ENCODE measurements at regions of chr22 and their contacts with region 1.

Region 1: GRCh38 chr22:31943976-31944699 is at the start of gene YWHAH:
- DNase-seq: peak; percentile 93
- H3K4me3 Mint-ChIP-seq: no peak within 1 kb of the TSS
- H3K27ac Mint-ChIP-seq: peak within 1 kb of the TSS; percentile 87
- H3K4me1 Mint-ChIP-seq: peaks cover 18% of the 10 kb centered on the region
- H3K27me3 Mint-ChIP-seq: no peaks in the 10 kb centered on the region
- total RNA-seq, gene YWHAH: 115 to 118 TPM

Region 2: GRCh38 chr22:30717331-30717921 is 1226.7 kb before region 1 on chr22:
- CTCF ChIA-PET with region 1: no interaction called
- intact Hi-C with region 1: no loop called
- DNase-seq: peak; percentile 30
- H3K4me3 Mint-ChIP-seq: no peak overlapping the region
- H3K27ac Mint-ChIP-seq: peak overlapping the region; percentile 26
- H3K4me1 Mint-ChIP-seq: peaks cover 3% of the 10 kb centered on the region
- H3K27me3 Mint-ChIP-seq: no peaks in the 10 kb centered on the region

Region 3: DNA sequence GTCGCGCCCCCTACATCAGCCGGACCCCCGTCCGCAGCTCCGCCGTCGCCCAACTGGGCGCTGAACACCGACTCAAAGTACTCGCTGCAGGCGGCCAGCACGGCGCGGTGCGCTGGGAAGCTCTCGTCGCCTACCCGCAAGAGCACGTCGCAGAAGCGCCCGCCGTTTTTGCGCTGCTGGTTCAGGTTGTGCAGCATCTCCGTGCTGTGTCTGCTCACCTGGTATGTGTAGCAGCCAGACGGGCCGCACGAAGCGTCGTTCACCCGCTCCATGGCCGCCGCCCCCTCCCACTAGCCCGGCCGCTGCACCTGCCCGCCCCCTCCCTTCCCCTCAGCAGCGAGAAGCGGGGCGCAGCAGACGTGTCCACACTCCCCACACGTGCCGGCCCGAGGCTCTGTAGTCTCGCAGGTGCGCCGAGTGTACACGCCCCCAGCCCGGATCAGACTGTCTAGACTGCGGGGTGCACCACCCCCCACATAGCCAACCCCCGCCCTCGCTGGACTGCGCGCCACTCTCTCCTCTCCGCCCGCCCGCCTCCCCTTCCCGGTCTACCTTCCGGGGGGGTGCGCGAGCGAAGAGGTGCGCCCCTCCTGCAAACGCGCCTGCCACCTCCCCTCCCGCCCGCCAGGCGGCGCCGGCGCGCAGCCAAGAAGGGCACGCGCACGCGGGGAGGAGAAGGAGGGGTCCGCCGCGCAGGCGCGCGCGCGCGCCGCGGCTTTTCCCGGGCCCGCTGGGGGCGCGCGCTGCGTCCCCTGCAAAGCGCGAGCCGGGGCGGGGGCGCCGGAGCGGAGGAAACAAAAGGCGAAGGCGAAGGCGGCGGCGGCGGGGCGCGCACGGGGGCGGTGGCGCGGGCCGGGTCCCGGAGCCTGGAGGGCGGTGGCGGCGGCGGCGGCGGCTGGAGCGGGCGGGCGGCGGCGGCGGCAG is 598.5 kb before region 1 on chr22:
- CTCF ChIA-PET with region 1: no interaction called
- intact Hi-C with region 1: loop called (anchors 5 kb)
- DNase-seq: peak; percentile 86
- H3K4me3 Mint-ChIP-seq: peak overlapping the region; percentile 90
- H3K27ac Mint-ChIP-seq: peak overlapping the region; percentile 94
- H3K4me1 Mint-ChIP-seq: peaks cover 42% of the 10 kb centered on the region
- H3K27me3 Mint-ChIP-seq: no peaks in the 10 kb centered on the region

Region 4: GRCh38 chr22:31439808-31440207 is 504.3 kb before region 1 on chr22:
- CTCF ChIA-PET with region 1: no interaction called
- intact Hi-C with region 1: no loop called
- DNase-seq: no peak
- H3K4me3 Mint-ChIP-seq: no peak overlapping the region
- H3K27ac Mint-ChIP-seq: no peak overlapping the region
- H3K4me1 Mint-ChIP-seq: peaks cover 3% of the 10 kb centered on the region
- H3K27me3 Mint-ChIP-seq: no peaks in the 10 kb centered on the region

Region 5: DNA sequence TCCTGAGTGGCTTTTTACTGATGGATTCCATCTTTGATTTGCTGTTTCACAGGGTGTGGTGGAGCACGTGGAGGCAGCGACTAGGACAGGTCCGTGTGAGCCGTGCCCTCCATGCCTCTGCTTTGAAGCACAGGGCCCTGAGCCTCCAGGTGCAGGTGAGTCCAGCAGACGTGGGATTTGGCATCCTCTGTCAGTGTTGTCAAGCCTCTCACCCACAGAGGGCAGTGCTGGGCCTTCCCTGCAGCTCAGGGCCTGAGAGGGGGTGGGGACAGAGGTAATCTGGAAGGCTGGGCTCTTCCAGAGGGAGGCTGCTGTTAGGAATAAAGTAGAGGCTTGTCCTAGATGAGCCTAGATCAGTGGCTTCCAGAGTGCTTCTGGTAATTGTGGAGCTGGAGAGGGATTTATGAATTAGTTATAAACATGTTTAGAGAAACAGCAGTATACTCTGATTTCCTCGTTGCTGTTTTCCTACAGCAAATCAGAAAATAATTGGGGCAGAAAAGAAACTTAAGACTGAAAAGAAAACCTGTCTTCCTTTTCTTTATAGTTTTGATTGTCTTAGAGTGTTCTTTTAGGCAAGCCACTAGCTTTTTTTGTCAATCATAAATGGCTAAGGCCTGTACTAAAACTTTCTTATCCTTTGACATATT is 382.8 kb before region 1 on chr22:
- CTCF ChIA-PET with region 1: no interaction called
- intact Hi-C with region 1: loop called (anchors 10 kb)
- DNase-seq: peak; percentile 83
- H3K4me3 Mint-ChIP-seq: no peak overlapping the region
- H3K27ac Mint-ChIP-seq: peak overlapping the region; percentile 20
- H3K4me1 Mint-ChIP-seq: no peaks in the 10 kb centered on the region
- H3K27me3 Mint-ChIP-seq: no peaks in the 10 kb centered on the region

Region 6: GRCh38 chr22:31768422-31769059 is 175.6 kb before region 1 on chr22:
- CTCF ChIA-PET with region 1: interaction called, 3 read pairs
- intact Hi-C with region 1: loop called (anchors 5 kb)
- DNase-seq: no peak
- H3K4me3 Mint-ChIP-seq: no peak overlapping the region
- H3K27ac Mint-ChIP-seq: peak overlapping the region; percentile 50
- H3K4me1 Mint-ChIP-seq: peaks cover 12% of the 10 kb centered on the region
- H3K27me3 Mint-ChIP-seq: no peaks in the 10 kb centered on the region

Region 7: DNA sequence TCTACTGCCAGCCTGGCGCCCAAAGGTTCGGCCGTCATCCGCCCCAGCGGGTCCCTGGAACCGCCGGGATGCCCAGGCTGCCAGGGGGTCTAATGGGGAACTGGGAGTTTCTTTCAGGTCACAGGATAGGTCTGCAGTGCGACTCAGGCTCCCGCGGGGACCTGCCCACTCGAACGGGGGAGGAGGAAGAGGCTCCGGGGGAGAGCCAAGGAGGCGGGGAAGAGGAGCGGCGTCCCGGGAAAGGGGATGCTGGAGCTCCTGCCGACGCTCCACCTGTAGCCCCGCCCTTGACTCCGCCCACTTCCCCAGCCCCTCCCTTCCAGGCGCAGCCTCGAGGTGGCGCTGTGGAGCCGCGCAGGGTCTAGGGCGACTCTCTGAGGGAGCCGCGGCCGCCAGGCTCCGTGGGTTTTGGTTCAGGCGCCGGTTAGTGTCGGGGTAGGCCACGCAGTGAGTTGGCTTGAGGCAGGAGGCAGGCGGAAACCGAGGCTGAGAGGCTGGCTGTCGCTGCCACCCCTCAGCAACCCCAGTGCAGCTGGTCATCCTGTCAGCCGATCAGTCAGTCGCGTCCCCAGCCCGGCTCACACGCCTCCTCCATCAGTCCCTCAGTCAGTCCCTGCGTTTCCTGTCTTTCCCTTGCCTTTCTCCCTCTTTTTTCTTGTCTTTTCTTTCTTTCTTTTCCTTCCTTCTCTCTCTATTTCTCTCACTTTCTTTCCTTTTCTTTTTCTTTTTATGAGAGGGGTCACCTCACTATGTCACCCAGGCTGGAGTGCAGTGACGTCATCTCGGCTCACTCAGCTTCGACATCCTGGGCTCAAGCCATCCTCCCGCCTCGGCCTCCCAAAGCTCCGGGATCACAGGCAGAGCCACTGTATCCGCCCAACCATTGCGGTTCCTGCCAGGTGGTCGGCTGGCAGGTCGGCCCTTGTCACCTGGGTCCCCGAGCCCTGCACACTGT is 26.6 kb after region 1 on chr22:
- CTCF ChIA-PET with region 1: interaction called, 13 read pairs
- intact Hi-C with region 1: loop called (anchors 1 kb)
- DNase-seq: peak; percentile 90
- H3K4me3 Mint-ChIP-seq: peak overlapping the region; percentile 68
- H3K27ac Mint-ChIP-seq: no peak overlapping the region
- H3K4me1 Mint-ChIP-seq: peaks cover 11% of the 10 kb centered on the region
- H3K27me3 Mint-ChIP-seq: no peaks in the 10 kb centered on the region